AG04449 (cell line): ENCODE measurements at regions of chr18 and their contacts with region 1.

Region 1: GRCh38 chr18:75041586-75041985 is 167.4 kb downstream of the PTGR3 start:
- DNase-seq: no peak
- H3K4me3 ChIP-seq: no peak overlapping the region
- CTCF ChIP-seq: peak; percentile 29

Region 2: DNA sequence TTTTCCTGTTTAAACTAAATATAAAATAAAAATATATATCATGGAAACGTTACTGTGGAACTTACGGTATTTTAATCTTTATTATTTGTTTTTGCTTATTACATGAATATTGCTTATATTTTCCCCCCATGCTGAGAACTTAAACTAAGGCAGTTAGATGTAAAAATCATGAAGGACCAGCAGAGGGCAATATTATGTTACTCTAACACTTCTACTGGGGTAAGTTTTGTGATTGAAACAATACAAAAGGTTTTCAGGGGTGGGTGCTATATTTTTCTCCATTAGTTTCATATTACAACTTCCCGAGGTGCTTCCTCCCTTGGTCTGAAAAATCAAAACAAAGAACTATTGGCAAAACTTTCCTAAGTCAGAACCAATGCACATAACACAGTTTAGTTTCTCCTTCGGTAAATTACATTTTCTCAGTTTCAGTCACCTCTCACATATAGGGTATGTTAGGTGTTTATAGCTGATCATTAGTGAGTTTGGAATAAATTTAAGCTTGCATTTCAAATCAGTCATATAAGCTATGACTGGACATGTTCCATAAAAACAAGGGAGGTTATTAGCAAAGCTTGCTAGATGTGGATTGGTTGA is 389.1 kb before region 1 on chr18:
- CTCF ChIA-PET with region 1: interaction called, 11 read pairs
- POLR2A ChIA-PET with region 1: no interaction called
- DNase-seq: no peak
- H3K4me3 ChIP-seq: no peak overlapping the region
- CTCF ChIP-seq: peak; percentile 35